Heart right ventricle (tissue), 16 donors: ENCODE measurements at regions of chr7 and their contacts with region 1.

Region 1: GRCh38 chr7:150420987-150421674 is 29.3 kb upstream of the GIMAP8 start:
- DNase-seq: peak; percentile 81
- ATAC-seq: peak; percentile 89 to 98 (median 97)
- H3K4me3 ChIP-seq: no peak overlapping the region
- H3K27ac ChIP-seq: no peak overlapping the region
- H3K4me1 ChIP-seq: peaks cover 0 to 8% (median 0%) of the 10 kb centered on the region in 9 donors
- H3K27me3 ChIP-seq: no peaks in the 10 kb centered on the region
- CTCF ChIP-seq: peak; percentile 74 to 96 (median 93)

Region 2: GRCh38 chr7:150322114-150322832 is 98.9 kb before region 1 on chr7:
- intact Hi-C with region 1: no loop called
- DNase-seq: no peak
- ATAC-seq: peak in 2 of 8 donors; percentile 19 to 35
- H3K4me3 ChIP-seq: peak overlapping the region; percentile 20 to 87 (median 68)
- H3K27ac ChIP-seq: peak overlapping the region in 4 of 10 donors; percentile 41 to 93 (median 64)
- H3K4me1 ChIP-seq: peaks cover 0 to 32% (median 15%) of the 10 kb centered on the region in 9 donors
- H3K27me3 ChIP-seq: peaks cover 0 to 19% (median 9%) of the 10 kb centered on the region in 7 donors
- CTCF ChIP-seq: no peak

Region 3: DNA sequence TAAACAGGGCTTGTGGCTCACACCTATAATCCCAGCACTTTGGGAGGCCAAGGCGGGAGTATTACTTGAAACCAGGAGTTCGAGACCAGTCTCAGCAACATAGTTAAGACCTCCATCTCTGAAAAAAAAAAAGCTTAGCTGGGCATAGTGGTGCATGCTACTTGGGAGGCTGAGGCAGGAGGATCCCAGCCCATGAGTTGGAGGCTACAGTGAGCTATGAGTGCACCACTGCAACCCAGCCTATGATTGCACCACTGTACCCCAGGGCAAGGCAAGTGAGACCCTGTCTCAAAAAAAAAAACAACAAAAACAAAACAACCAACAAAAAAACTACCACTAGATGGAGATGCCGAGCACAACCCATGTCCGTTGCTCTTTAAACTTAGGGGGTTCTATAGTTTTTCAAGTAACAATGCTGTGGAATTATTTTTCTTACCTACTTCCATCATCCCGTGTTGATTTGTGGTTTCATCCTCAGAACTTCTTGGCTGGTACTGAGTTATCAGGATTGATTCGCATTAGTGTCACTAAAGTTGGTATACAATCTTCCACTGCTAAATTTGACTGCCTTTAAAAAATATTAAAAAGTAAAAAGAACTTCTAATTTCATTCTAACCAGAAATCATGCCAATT is 64.8 kb before region 1 on chr7:
- intact Hi-C with region 1: loop called in 8 of 10 experiments (anchors 1 to 5 kb)
- DNase-seq: no peak
- ATAC-seq: peak in 1 of 8 donors; percentile 19
- H3K4me3 ChIP-seq: no peak overlapping the region
- H3K27ac ChIP-seq: no peak overlapping the region
- H3K4me1 ChIP-seq: peaks cover 0 to 14% (median under 1%) of the 10 kb centered on the region in 9 donors
- H3K27me3 ChIP-seq: no peaks in the 10 kb centered on the region
- CTCF ChIP-seq: peak; percentile 39 to 79 (median 71)

Region 4: GRCh38 chr7:150368096-150368883 is 52.8 kb before region 1 on chr7 and contains the start of gene REPIN1:
- intact Hi-C with region 1: loop called in 1 of 10 experiments (anchors 2 kb)
- DNase-seq: peak; percentile 94 to 95
- ATAC-seq: peak; percentile 79 to 95 (median 87)
- H3K4me3 ChIP-seq: peak within 1 kb of the TSS; percentile 74 to 99 (median 97)
- H3K27ac ChIP-seq: peak within 1 kb of the TSS; percentile 90 to 100 (median 98)
- H3K4me1 ChIP-seq: peaks cover 14 to 61% (median 31%) of the 10 kb centered on the region in 9 donors
- H3K27me3 ChIP-seq: no peaks in the 10 kb centered on the region
- CTCF ChIP-seq: no peak
- total RNA-seq, gene REPIN1: 88.7 to 132 (median 114) TPM

Region 5: GRCh38 chr7:150378853-150379440 is 42.2 kb before region 1 on chr7 and contains the start of gene ZNF775:
- intact Hi-C with region 1: loop called in 1 of 10 experiments (anchors 1 kb)
- DNase-seq: peak; percentile 95 to 96
- ATAC-seq: peak; percentile 97 to 99 (median 98)
- H3K4me3 ChIP-seq: peak within 1 kb of the TSS; percentile 70 to 98 (median 90)
- H3K27ac ChIP-seq: peak within 1 kb of the TSS; percentile 80 to 98 (median 96)
- H3K4me1 ChIP-seq: peaks cover 5 to 44% (median 36%) of the 10 kb centered on the region in 9 donors
- H3K27me3 ChIP-seq: no peaks in the 10 kb centered on the region
- CTCF ChIP-seq: peak in 1 of 9 donors; percentile 3
- total RNA-seq, gene ZNF775: 1.9 to 4.7 (median 2.9) TPM

Region 6: GRCh38 chr7:150481186-150481920 is 60.2 kb after region 1 on chr7:
- intact Hi-C with region 1: no loop called
- DNase-seq: no peak
- ATAC-seq: peak in 4 of 8 donors; percentile 15 to 31 (median 30)
- H3K4me3 ChIP-seq: peak overlapping the region in 1 of 10 donors; percentile 2
- H3K27ac ChIP-seq: peak overlapping the region in 9 of 10 donors; percentile 34 to 93 (median 63)
- H3K4me1 ChIP-seq: peaks cover 0 to 87% (median 68%) of the 10 kb centered on the region in 9 donors
- H3K27me3 ChIP-seq: no peaks in the 10 kb centered on the region
- CTCF ChIP-seq: no peak

Region 7: GRCh38 chr7:150876817-150877526 is 455.8 kb after region 1 on chr7:
- intact Hi-C with region 1: loop called in 1 of 10 experiments (anchors 10 kb)
- DNase-seq: peak; percentile 56 to 81
- ATAC-seq: peak; percentile 76 to 96 (median 88)
- H3K4me3 ChIP-seq: no peak overlapping the region
- H3K27ac ChIP-seq: peak overlapping the region in 1 of 10 donors; percentile 31
- H3K4me1 ChIP-seq: peaks cover 0 to 13% (median 6%) of the 10 kb centered on the region in 9 donors
- H3K27me3 ChIP-seq: peaks cover 0 to 4% (median 0%) of the 10 kb centered on the region in 7 donors
- CTCF ChIP-seq: peak; percentile 38 to 70 (median 58)